ENCODE measurements at regions of chr20 and their contacts with region 1.

Region 1: GRCh38 chr20:34312544-34313217 is 9.5 kb upstream of the AHCY start:
- DNase-seq: peak; percentile 91
- ATAC-seq: peak; percentile 94
- H3K4me3 ChIP-seq: peak overlapping the region; percentile 24 to 58
- H3K27ac ChIP-seq: 0 out of 2 replicates have a peak overlapping the region, but pooled peaks have one; percentile 3
- H3K4me1 ChIP-seq: 0 out of 2 replicates have a peak, but pooled peaks cover 12% of the 10 kb centered on the region
- H3K27me3 ChIP-seq: no peaks in the 10 kb centered on the region
- CTCF ChIP-seq: peak; percentile 99

Region 2: DNA sequence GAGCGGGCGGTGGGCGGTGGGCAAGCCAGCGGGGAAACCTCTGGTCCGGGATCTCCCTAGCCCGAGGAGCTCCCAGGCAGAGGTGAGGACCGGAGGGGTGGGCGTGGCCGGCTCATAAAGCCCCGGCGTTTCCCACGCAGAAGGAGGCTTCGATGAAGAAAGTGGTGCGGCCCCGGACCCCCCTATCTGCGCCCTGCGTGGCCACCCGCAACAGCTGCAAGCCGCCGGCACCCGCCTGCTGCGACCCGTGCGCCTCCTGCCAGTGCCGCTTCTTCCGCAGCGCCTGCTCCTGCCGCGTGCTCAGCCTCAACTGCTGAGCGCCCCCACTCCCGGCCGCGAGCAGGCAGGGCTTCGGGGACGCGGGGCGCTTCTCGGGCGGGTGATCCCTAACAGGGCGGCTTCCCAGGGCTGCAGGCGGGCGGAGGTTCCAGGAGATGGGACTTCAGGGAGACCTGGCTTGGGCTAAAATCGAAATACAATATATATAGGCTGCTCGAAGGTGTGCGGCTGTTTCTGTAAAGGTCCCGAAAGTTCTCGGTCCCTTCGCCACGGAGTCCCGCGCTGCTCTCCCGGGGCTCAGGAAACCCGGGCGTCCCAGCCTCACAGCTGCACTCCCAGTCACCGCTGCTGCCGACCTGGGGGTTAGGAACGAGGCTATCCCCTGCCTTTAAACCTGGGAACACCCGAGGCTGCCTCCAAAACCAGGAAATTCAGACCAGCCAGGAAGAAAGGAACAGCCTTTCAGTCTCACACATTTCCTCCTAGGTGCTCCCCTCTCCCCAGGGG is 43.6 kb before region 1 on chr20:
- CTCF ChIA-PET with region 1: no interaction called
- POLR2A ChIA-PET with region 1: no interaction called
- in situ Hi-C with region 1: no loop called
- intact Hi-C with region 1: no loop called
- DNase-seq: no peak
- ATAC-seq: no peak
- H3K4me3 ChIP-seq: no peak overlapping the region
- H3K27ac ChIP-seq: no peak overlapping the region
- H3K4me1 ChIP-seq: no peaks in the 10 kb centered on the region
- H3K27me3 ChIP-seq: no peaks in the 10 kb centered on the region
- CTCF ChIP-seq: no peak

Region 3: GRCh38 chr20:34363062-34363464 is 50.4 kb after region 1 on chr20 and contains the start of gene ITCH:
- CTCF ChIA-PET with region 1: interaction called, 13 read pairs
- POLR2A ChIA-PET with region 1: no interaction called
- in situ Hi-C with region 1: no loop called
- intact Hi-C with region 1: no loop called
- DNase-seq: peak; percentile 75
- ATAC-seq: peak; percentile 100
- H3K4me3 ChIP-seq: peak within 1 kb of the TSS; percentile 86 to 89
- H3K27ac ChIP-seq: peak within 1 kb of the TSS; percentile 87
- H3K4me1 ChIP-seq: peaks cover 20% of the 10 kb centered on the region
- H3K27me3 ChIP-seq: no peaks in the 10 kb centered on the region
- CTCF ChIP-seq: no peak
- total RNA-seq, gene ITCH: 63.9 TPM

Region 4: GRCh38 chr20:34435589-34435988 is 122.9 kb after region 1 on chr20:
- CTCF ChIA-PET with region 1: interaction called, 10 read pairs
- POLR2A ChIA-PET with region 1: no interaction called
- in situ Hi-C with region 1: no loop called
- intact Hi-C with region 1: no loop called
- DNase-seq: no peak
- ATAC-seq: no peak
- H3K4me3 ChIP-seq: no peak overlapping the region
- H3K27ac ChIP-seq: no peak overlapping the region
- H3K4me1 ChIP-seq: no peaks in the 10 kb centered on the region
- H3K27me3 ChIP-seq: no peaks in the 10 kb centered on the region
- CTCF ChIP-seq: no peak

Region 5: DNA sequence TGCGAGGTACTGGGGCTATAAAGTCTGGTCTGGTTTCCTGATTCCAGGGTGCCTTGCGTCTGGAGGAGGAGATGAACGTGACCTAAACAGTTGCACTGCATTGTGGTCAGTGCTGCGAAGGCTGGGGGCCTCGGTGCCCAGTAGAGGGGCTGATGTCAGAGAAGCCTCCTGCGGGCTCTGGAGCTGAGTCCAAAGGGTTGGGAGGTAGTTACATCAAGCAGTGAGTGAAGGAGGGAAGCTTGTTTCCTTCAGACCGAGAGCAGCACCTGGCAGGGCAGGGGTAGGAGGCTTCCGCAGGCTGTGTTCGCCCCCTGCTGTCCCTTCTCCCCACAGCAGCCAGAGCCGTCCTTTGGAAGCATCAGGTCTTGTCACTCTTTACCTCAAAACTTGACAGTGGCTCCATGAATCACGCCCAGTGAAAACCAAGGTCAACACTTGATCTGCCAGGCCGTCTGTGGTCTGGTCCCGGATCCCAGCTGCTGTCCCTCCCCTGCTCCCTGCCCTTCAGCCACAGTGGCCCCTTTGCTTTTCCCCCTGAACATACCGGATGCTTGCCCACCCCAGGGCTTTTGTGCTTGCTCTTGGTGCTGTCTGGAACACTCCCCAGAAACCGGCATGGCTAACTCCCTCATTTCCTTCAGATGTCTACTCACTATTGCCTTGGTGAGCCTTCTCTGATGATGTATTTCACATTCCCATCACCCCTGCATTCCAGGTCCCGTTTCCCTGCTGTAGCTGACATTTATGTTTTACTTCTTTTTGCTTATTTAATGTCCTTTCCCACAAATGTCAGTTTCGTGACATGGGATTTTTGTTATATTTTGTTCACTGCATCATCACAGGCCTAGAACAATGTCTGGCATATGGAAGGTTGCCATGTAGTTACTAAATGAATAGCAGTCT is 210.5 kb after region 1 on chr20:
- CTCF ChIA-PET with region 1: interaction called, 33 read pairs
- POLR2A ChIA-PET with region 1: no interaction called
- in situ Hi-C with region 1: no loop called
- intact Hi-C with region 1: loop called (anchors 2 kb)
- DNase-seq: no peak
- ATAC-seq: peak; percentile 79
- H3K4me3 ChIP-seq: peak overlapping the region in 1 of 2 experiments; percentile 32; a peak in 3 of 4 replicates
- H3K27ac ChIP-seq: peak overlapping the region; percentile 71
- H3K4me1 ChIP-seq: peaks cover 51% of the 10 kb centered on the region
- H3K27me3 ChIP-seq: no peaks in the 10 kb centered on the region
- CTCF ChIP-seq: peak; percentile 88